Mammary epithelial cell (primary cell): ENCODE measurements at regions of chr17 and their contacts with region 1.

Region 1: DNA sequence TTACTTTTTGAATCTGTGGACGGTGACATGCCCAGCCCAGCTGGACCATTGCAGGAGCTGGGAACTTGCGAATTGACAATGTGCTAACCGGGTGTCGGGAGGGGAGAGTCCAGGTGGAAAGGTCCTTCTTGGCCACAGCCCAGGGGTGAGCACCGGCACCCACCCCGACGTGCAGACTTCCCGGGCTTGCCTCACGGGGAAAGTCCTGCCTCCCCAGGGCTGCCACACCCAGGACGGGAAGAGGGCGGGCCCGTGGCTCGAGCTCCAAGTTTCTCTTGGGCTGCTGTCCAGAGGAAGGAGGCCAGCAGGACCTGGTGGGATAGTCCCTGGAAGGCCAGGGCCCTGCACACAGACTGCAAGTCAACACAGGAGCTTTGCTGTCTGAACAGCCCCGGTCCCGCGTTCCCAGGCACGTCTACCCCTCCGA is 17.7 kb downstream of the CARD14 start:
- DNase-seq: peak; percentile 45
- H3K4me3 ChIP-seq: no peak overlapping the region
- H3K27ac ChIP-seq: no peak overlapping the region
- H3K4me1 ChIP-seq: peaks cover 22% of the 10 kb centered on the region
- H3K27me3 ChIP-seq: no peaks in the 10 kb centered on the region
- CTCF ChIP-seq: no peak

Region 2: GRCh38 chr17:80147035-80147836 is 40.3 kb before region 1 on chr17 and contains the start of gene EIF4A3:
- CTCF ChIA-PET with region 1: no interaction called
- dilution Hi-C with region 1: no loop called
- in situ Hi-C with region 1: no loop called
- intact Hi-C with region 1: loop called (anchors 5 kb)
- DNase-seq: peak; percentile 98
- H3K4me3 ChIP-seq: peak within 1 kb of the TSS; percentile 78 to 96 (median 82)
- H3K27ac ChIP-seq: peak within 1 kb of the TSS; percentile 81
- H3K4me1 ChIP-seq: peaks cover 14% of the 10 kb centered on the region
- H3K27me3 ChIP-seq: no peaks in the 10 kb centered on the region
- CTCF ChIP-seq: peak in 1 of 2 donors; percentile 6
- total RNA-seq, gene EIF4A3: 79.7 to 86.4 TPM